Esophagus muscularis mucosa (tissue), 4 donors: ENCODE measurements at regions of chr9 and their contacts with region 1.

Region 1: DNA sequence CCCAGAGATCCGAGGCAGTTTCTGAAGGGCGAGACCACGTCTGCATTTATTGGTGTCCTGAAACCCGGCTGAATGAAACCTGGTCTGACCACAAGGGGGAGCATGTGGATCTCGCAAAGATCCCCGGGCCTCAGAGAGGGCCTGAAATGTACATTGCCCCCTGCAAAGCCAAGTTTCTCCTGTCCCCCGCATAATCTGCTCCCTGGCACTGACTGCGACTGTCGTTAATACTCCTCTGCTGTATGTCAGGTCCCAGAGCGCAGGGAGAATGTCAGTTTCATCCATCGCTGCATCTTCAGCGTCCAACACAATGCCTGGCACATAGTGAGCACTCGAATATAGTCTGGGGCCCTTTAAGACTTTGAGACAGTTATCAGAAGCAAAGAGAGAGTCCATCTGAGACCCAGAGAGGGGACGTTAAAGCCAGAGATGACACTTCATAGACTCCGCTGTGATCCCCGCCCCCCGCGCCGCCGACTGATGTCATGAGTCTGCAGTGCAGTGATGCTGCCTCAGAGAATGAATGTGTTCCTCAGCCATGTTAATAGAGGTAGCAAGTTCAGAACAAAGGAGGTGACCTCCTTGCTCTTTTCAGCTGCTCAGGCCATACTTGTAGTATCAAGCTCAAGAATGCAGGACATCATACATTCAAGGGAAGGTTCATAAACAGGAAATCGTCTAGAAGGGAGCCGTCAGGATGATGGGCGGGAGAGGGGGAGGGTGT is 74.5 kb upstream of the BARHL1 start:
- DNase-seq: no peak
- H3K4me3 ChIP-seq: no peak overlapping the region
- H3K27ac ChIP-seq: no peak overlapping the region
- H3K4me1 ChIP-seq: peaks cover 0 to 6% (median 0%) of the 10 kb centered on the region in 4 donors
- H3K27me3 ChIP-seq: peaks cover 0 to 96% (median 0%) of the 10 kb centered on the region in 4 donors
- CTCF ChIP-seq: peak; percentile 66 to 80 (median 77)
- EP300 ChIP-seq: no peak
- POLR2A ChIP-seq: no peak

Region 2: GRCh38 chr9:132486706-132487350 is 21.1 kb before region 1 on chr9:
- intact Hi-C with region 1: no loop called
- DNase-seq: no peak
- H3K4me3 ChIP-seq: no peak overlapping the region
- H3K27ac ChIP-seq: no peak overlapping the region
- H3K4me1 ChIP-seq: no peaks in the 10 kb centered on the region
- H3K27me3 ChIP-seq: peaks cover 0 to 83% (median 18%) of the 10 kb centered on the region in 4 donors
- CTCF ChIP-seq: no peak
- EP300 ChIP-seq: no peak
- POLR2A ChIP-seq: no peak

Region 3: DNA sequence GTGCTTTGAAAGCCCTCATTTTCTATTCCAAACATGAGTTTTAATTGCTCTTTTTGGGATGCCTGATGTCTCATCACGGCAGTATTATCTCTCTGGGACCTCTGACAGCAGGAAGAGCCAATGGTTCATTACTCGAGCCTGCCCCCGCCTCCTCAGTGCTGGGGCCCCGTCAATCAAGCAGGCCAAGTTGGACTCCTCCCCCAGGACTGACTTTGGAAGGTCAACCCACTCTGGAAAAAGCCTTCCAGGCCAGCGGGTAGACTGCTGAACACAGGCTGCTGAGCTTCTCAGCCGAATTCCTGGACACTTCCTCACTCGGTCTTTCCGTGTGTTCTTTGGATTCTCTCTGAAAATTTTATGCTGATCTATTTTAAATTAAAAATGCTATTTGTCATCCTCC is 65.0 kb after region 1 on chr9:
- intact Hi-C with region 1: loop called (anchors 5 kb)
- DNase-seq: no peak
- H3K4me3 ChIP-seq: no peak overlapping the region
- H3K27ac ChIP-seq: no peak overlapping the region
- H3K4me1 ChIP-seq: no peaks in the 10 kb centered on the region
- H3K27me3 ChIP-seq: peaks cover 0 to 85% (median 17%) of the 10 kb centered on the region in 4 donors
- CTCF ChIP-seq: no peak
- EP300 ChIP-seq: no peak
- POLR2A ChIP-seq: no peak